Activated CD4-positive, alpha-beta T cell treated with anti-CD3 and anti-CD28 coated beads for 36 hours (primary cell): ENCODE measurements at regions of chr22 and their contacts with region 1.

Region 1: GRCh38 chr22:30968924-30969539 is at the start of gene TUG1:
- DNase-seq: peak; percentile 99
- ATAC-seq: peak; percentile 93
- H3K4me3 Mint-ChIP-seq: peak within 1 kb of the TSS; percentile 90
- H3K27ac Mint-ChIP-seq: peak within 1 kb of the TSS; percentile 95
- H3K4me1 Mint-ChIP-seq: peaks cover 51% of the 10 kb centered on the region
- H3K27me3 Mint-ChIP-seq: no peaks in the 10 kb centered on the region
- total RNA-seq, gene TUG1: 46.8 to 56.4 TPM

Region 2: GRCh38 chr22:30262917-30263741 is 705.9 kb before region 1 on chr22:
- CTCF ChIA-PET with region 1: no interaction called
- POLR2A ChIA-PET with region 1: no interaction called
- intact Hi-C with region 1: loop called in 1 of 2 experiments (anchors 5 kb)
- DNase-seq: peak; percentile 88
- ATAC-seq: no peak
- H3K4me3 Mint-ChIP-seq: peak overlapping the region; percentile 62
- H3K27ac Mint-ChIP-seq: peak overlapping the region; percentile 51
- H3K4me1 Mint-ChIP-seq: peaks cover 33% of the 10 kb centered on the region
- H3K27me3 Mint-ChIP-seq: no peaks in the 10 kb centered on the region

Region 3: DNA sequence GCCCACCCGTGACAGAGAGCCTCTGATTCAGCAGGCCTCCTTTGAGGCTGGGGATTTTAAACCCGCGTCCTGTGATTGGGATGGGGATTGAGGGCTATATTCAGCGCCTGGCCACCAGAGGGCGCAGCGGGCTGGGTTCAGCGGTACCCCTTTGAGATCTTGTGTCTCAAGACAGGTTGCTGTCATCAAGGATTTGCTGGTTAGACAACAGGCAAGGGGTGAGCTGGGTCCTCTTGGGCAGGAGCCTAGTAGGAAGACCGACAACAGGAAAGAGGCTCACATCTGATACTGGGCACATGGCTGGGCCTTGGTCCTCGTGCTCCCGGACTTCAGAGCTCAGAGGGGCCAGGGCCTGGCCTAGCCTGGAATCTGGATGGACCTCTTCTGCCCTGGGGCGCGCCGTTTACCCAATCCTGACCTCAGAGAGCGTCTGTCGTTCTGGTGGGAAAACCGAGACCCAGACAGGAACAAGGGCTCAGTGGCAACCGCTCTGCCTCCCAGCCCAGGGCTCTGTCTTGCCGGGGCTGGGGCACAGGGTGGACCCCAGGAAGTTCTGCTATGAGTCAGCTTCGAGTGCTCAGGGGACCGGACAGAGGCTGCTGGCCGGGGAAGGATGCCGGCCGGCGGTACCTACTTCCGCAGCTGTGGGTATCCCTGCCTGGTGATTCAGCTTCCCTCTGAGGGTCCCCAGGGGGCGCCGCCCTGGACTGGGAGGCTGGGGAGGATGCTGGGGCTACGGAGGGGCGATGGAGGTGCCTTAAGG is 334.4 kb before region 1 on chr22:
- CTCF ChIA-PET with region 1: no interaction called
- POLR2A ChIA-PET with region 1: no interaction called
- intact Hi-C with region 1: loop called in 1 of 2 experiments (anchors 2 kb)
- DNase-seq: peak; percentile 95
- ATAC-seq: peak; percentile 77
- H3K4me3 Mint-ChIP-seq: peak overlapping the region; percentile 75
- H3K27ac Mint-ChIP-seq: peak overlapping the region; percentile 84
- H3K4me1 Mint-ChIP-seq: peaks cover 22% of the 10 kb centered on the region
- H3K27me3 Mint-ChIP-seq: no peaks in the 10 kb centered on the region

Region 4: DNA sequence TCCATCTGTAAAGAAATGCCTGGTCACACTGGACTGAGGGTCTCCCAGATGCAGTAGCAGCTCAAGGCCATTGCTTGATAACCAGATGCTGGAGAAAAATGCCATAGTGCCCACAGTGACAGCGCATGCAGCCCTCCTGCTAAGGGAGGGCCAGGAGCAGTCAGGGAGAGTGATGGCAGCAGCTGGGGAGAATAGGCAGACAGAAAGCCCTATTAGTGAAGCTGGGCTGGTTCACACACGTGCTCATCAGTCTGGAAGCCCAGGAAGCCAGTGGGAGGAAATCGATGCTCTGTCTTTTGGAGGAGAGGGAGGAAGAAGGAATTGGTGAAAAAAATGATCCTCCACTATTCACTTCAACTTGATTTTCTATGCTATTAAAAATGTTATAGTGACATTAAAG is 191.4 kb before region 1 on chr22:
- CTCF ChIA-PET with region 1: no interaction called
- POLR2A ChIA-PET with region 1: no interaction called
- intact Hi-C with region 1: no loop called
- DNase-seq: no peak
- ATAC-seq: no peak
- H3K4me3 Mint-ChIP-seq: no peak overlapping the region
- H3K27ac Mint-ChIP-seq: no peak overlapping the region
- H3K4me1 Mint-ChIP-seq: peaks cover 2% of the 10 kb centered on the region
- H3K27me3 Mint-ChIP-seq: peaks cover 2% of the 10 kb centered on the region

Region 5: GRCh38 chr22:30920407-30920806 is 48.6 kb before region 1 on chr22:
- CTCF ChIA-PET with region 1: interaction called, 4 read pairs
- POLR2A ChIA-PET with region 1: no interaction called
- intact Hi-C with region 1: loop called in 1 of 2 experiments (anchors 2 kb)
- DNase-seq: peak; percentile 91
- ATAC-seq: peak; percentile 83
- H3K4me3 Mint-ChIP-seq: peak overlapping the region; percentile 45
- H3K27ac Mint-ChIP-seq: no peak overlapping the region
- H3K4me1 Mint-ChIP-seq: peaks cover 9% of the 10 kb centered on the region
- H3K27me3 Mint-ChIP-seq: no peaks in the 10 kb centered on the region

Region 6: GRCh38 chr22:31107178-31107893 is 138.3 kb after region 1 on chr22 and contains the start of gene SELENOM:
- CTCF ChIA-PET with region 1: interaction called, 9 read pairs
- POLR2A ChIA-PET with region 1: interaction called, 3 read pairs
- intact Hi-C with region 1: loop called in 1 of 2 experiments (anchors 1 kb)
- DNase-seq: peak; percentile 94
- ATAC-seq: peak; percentile 96
- H3K4me3 Mint-ChIP-seq: peak within 1 kb of the TSS; percentile 74
- H3K27ac Mint-ChIP-seq: peak within 1 kb of the TSS; percentile 60
- H3K4me1 Mint-ChIP-seq: peaks cover 19% of the 10 kb centered on the region
- H3K27me3 Mint-ChIP-seq: no peaks in the 10 kb centered on the region
- total RNA-seq, gene SELENOM: 8.8 to 12.2 TPM

Region 7: GRCh38 chr22:31399211-31400028 is 430.4 kb after region 1 on chr22 and contains the start of gene DRG1:
- CTCF ChIA-PET with region 1: no interaction called
- POLR2A ChIA-PET with region 1: no interaction called
- intact Hi-C with region 1: loop called (anchors 1 to 5 kb)
- DNase-seq: peak; percentile 99
- ATAC-seq: peak; percentile 98
- H3K4me3 Mint-ChIP-seq: peak within 1 kb of the TSS; percentile 99
- H3K27ac Mint-ChIP-seq: peak within 1 kb of the TSS; percentile 91
- H3K4me1 Mint-ChIP-seq: peaks cover 18% of the 10 kb centered on the region
- H3K27me3 Mint-ChIP-seq: peaks cover under 1% of the 10 kb centered on the region
- total RNA-seq, gene DRG1: 104 to 106 TPM

Region 8: DNA sequence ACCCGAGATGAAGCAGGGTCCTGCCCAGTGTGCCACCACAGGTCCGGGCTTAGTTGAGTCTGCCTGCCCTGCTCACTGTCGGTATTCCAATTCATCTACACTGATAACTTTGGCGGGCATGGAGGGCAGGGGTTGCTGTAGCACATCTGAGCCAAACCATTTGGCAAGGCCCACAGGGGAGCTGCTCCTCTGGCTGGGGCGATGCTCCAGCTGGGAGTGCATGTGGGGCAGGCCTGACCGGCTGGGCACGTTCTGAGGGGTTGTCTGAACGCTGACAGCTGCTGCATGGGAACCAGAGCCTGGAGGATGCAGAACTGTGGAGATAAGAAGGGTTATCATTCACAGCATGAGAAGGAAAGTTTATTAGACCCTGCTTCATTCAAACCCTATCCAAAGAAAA is 470.8 kb after region 1 on chr22:
- CTCF ChIA-PET with region 1: no interaction called
- POLR2A ChIA-PET with region 1: no interaction called
- intact Hi-C with region 1: no loop called
- DNase-seq: no peak
- ATAC-seq: no peak
- H3K4me3 Mint-ChIP-seq: no peak overlapping the region
- H3K27ac Mint-ChIP-seq: no peak overlapping the region
- H3K4me1 Mint-ChIP-seq: no peaks in the 10 kb centered on the region
- H3K27me3 Mint-ChIP-seq: no peaks in the 10 kb centered on the region